Left ventricle myocardium superior (tissue), 1 donor: ENCODE measurements at regions of chr4 and their contacts with region 1.

Region 1: DNA sequence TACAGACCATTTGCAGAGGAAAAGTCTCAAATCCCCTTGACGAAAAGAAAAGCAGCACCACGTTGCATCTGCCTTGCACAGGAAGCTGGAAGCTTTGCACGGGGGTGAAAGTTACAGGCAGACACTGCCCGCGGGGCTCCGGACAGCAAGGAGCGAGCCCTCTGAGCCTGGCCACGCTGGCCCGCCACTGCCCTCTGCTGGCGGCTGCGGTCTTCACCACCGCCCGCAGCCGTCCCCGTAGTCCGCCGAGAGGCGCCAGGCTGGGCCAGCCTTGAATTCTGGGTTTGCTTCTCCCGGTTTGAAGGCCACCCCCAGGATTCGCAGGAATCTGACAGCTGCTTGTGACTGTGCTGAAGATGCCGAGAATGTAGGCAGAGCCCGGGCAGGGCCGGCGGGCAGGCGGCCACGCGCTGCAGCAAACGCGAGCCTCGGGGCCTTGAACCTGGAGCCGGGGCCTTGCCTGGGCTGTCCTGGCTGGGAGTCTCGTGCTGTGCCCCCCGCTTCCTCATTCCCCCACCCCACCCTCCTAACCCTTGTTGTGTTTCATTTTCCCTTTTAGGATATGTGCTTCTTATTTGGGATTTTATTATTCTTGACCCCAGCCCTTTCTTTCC is 49.2 kb downstream of the ENPP6 start:
- DNase-seq: peak; percentile 88
- ATAC-seq: peak; percentile 98

Region 2: DNA sequence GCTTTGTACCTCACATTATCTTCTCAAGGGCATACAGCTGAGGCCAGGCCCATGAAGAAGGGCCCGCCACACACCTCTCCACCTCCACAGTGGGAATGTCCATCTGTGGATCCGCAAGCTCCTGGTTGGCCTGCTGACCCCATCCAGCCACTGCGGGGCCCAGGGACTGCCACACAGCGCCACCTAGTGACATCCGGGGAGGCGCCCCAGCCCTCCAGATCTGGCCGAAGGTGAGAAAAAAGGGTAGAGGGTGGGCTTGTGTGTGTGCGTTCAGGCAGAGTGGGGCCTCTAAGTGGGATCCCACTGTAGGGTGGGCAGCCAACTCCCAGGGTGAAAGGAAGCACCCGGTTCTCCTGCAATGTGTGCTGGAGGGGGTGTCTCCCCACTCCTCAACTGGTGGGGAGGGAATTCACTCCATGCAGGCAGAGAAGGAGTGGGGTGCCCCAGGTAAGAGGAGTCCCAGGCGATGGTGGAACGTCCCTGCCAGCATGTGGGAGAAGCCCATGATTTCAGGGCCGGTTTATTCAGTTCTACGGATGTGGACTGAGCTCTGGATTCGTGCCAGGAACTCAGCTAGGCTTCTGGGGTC is 68.1 kb before region 1 on chr4:
- intact Hi-C with region 1: loop called (anchors 10 kb)
- DNase-seq: peak; percentile 81
- ATAC-seq: peak; percentile 84

Region 3: GRCh38 chr4:184201179-184201578 is 32.7 kb after region 1 on chr4:
- intact Hi-C with region 1: loop called (anchors 2 kb)
- DNase-seq: no peak
- ATAC-seq: no peak